Posterior vena cava (tissue), 2 donors: ENCODE measurements at regions of chr5 and their contacts with region 1.

Region 1: DNA sequence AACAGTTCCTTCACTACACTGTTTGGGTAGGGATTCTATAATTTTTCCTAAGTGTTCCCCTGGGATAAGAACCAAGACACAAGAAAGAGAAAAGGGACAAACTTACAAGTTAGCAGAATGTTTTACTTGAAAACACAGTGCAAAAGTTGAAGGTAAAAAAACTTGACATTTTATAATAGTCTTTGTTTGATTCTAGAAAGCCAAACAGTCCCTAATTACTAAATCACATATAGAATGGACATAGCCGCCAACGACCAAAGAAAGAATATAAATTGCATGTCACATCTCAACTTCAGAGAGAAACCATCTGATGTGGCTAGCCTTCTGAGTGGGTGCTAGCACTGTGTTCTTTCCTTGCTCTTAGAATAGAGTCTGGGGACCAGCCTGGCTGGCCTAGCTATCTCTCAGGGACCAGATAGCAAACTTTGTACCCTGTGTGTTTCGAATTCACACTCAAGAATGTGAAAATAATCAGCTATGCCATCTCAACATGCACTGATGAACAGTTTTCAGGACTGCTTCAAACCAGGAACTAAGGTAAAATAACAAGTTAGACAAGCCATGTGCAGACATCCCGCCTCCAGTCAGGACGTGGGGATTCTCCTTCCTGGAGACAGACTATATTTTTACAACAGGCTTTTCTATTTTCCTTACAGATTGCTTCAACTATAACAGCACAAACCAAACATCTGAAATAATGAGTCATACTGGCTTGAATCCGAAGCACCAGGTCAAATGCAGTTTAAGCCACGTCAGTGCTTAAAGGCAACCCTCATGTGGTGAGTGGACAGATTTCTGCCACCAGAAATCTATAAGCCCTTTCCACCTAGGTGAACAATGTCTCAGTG is 53.7 kb downstream of the LHFPL2 start:
- DNase-seq: no peak

Region 2: DNA sequence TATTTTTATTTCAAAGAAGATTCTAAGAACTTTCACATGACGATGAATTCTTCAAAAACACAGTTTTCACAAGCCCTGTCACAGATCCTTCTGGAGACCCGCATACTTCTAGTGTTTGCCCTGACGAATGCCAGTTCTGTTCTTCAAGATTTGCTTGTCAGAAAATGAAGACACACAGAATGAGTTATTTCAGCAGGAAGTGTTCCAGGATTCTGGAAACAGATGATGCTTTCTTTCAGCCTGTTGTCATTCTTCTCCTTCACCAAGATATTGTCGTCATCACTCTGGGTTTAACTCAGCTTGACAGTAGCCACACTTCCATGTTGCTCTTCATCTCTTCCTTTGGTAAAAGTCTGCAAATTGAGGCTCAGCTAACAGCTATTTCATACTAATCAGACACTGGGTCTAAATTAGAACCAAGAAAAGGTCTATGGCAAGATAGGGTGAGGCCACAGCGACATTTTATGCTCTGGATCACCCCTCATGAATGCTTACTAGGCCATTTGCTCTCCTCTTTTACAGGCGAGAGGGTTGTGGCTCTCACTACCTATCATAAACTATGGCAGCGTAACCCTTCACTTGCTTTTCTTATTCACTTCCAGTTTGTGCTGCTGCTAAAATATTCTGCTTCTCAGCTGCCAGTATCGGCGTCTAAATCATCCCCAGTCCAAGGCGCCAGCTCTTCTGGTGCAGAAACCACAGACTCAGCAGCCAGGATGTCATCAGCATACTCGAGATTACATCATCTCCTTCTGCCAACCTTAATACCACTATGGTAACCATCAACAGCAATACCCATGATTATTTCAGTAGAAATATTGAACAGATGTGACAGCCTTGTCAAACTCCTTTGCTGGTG is 659.1 kb before region 1 on chr5:
- intact Hi-C with region 1: no loop called
- DNase-seq: no peak

Region 3: GRCh38 chr5:78547731-78548615 is 46.9 kb before region 1 on chr5:
- intact Hi-C with region 1: loop called in 1 of 2 experiments (anchors 10 kb)
- DNase-seq: peak; percentile 97

Region 4: DNA sequence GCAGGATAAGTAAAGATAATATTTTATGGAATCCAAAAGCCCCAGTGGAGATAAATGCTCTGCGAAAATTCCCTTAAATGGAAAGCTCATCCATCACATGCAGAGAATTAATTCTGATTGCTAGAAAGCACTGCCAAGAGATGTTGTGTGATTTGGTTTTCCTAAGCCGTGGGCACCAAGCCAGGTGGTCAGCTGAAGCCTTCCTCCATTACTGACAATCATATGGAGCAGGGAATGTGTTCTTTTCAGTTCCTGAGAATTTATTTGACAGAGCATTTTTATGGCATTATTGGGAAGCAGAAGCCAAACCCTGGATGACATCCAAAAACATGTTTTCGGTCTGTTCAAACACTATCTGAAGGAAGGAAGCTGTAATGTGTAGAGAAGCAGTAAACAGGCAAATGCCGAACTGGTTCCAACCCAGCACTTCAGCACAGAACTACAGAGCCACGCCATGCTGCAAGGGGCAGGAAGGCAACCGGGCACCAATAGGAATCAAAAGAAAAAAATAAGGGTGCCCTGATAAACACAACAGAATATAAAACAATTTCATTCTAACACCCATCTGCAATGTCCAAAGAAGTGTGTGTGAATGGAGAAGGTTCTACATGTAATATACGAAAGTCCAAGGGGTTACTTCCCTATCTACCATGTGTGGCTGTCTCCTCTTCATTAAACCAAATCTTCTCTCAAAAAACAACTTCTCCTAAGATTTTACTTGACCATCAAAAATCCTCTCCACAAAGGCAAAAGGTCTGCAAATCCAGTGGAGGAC is 378.0 kb after region 1 on chr5:
- intact Hi-C with region 1: no loop called
- DNase-seq: no peak